Right ventricle myocardium superior (tissue), 1 donor: ENCODE measurements at regions of chr4 and their contacts with region 1.

Region 1: GRCh38 chr4:18593445-18594002 is 572.0 kb upstream of the LCORL start:
- DNase-seq: no peak
- ATAC-seq: no peak

Region 2: GRCh38 chr4:17552427-17552826 is 1041.1 kb before region 1 on chr4:
- intact Hi-C with region 1: loop called (anchors 5 kb)
- DNase-seq: no peak
- ATAC-seq: no peak

Region 3: DNA sequence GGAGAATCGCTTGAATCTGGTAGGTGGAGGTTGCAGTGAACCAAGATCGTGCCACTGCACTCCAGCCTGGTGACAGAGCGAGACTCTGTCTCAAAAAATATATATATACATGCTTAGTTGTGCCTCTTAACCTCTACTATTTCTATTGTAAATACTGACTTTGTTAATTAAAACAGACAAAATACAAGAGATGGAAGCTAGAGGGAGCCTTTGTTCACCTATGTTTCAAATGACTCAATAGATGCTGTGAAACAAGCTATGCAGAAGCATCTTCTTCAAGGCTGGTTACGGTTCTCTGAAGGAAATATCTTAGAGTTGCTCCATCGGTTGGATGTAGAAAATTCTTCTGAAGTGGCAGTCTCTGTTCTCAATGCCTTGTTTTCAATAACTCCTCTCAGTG is 776.5 kb before region 1 on chr4:
- intact Hi-C with region 1: loop called (anchors 5 kb)
- DNase-seq: no peak
- ATAC-seq: peak; percentile 60

Region 4: GRCh38 chr4:18278244-18278643 is 315.3 kb before region 1 on chr4:
- intact Hi-C with region 1: no loop called
- DNase-seq: no peak
- ATAC-seq: no peak